ENCODE measurements at regions of chr11 and their contacts with region 1.

Region 1: DNA sequence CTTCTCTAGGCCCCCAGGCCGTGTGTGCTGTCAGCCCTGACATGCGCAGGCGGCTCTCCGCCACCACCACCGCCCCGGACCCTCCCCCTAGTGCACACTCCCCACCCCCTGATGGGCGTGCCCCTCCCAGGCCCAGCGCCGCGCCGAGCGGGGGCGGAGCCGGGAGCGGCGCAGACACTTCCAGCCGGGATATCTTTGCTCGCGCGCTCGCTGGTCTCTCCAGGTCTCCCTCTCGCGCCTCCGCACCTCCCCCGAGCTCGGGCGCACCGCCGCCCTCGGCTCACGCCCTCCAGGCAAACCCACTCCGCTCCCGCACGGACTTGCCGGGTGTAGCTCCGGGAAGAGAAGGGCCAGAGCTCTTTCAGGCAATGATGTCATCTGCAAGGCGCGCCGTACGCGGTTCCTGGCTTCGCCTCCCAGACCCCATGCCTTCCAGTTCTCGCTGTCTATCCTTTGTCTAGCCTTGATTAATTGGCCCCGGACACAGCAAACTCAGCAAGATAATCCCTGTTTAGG is at the start of gene SCN3B:
- DNase-seq: no peak
- H3K4me3 ChIP-seq: peak within 1 kb of the TSS; percentile 67
- H3K27me3 ChIP-seq: peaks cover 4% of the 10 kb centered on the region
- CTCF ChIP-seq: no peak
- polyA plus RNA-seq, gene SCN3B: 0.16 and 0.18 TPM in 2 replicates

Region 2: GRCh38 chr11:123251657-123252344 is 402.8 kb before region 1 on chr11:
- CTCF ChIA-PET with region 1: no interaction called
- POLR2A ChIA-PET with region 1: no interaction called
- DNase-seq: no peak
- H3K4me3 ChIP-seq: no peak overlapping the region
- H3K27me3 ChIP-seq: no peaks in the 10 kb centered on the region
- CTCF ChIP-seq: no peak

Region 3: DNA sequence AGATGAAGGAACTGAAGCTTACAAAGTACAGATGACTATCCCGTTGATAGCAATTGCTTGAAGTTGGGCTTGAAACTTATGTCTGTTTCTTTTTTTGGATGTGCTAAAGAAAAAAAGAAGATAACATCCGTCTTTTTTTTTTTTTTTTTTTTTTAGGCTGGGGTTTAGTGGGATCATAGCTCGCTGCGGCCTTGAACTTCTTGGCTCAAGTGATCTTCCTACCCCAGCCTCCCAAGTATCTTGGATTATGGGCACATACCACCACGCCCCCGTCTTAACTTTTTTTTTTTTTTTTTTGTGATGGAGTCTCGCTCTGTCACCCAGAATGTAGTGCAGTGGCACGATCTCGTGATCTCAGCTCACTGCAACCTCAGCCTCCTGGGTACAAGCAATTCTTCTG is 40.6 kb after region 1 on chr11:
- CTCF ChIA-PET with region 1: no interaction called
- POLR2A ChIA-PET with region 1: interaction called, 27 read pairs
- DNase-seq: no peak
- H3K4me3 ChIP-seq: no peak overlapping the region
- H3K27me3 ChIP-seq: 0 out of 2 replicates have a peak, but pooled peaks cover 4% of the 10 kb centered on the region
- CTCF ChIP-seq: no peak